ENCODE measurements at regions of chr13 and their contacts with region 1.

Region 1: GRCh38 chr13:110915057-110915873 is at the start of gene ANKRD10:
- DNase-seq: peak; percentile 99
- H3K4me3 ChIP-seq: peak within 1 kb of the TSS; percentile 81 to 96
- H3K27ac ChIP-seq: peak within 1 kb of the TSS; percentile 97 to 98
- H3K4me1 ChIP-seq: peaks cover 0 to 43% (median 24%) of the 10 kb centered on the region in 4 donors
- H3K27me3 ChIP-seq: no peaks in the 10 kb centered on the region
- CTCF ChIP-seq: peak; percentile 90 to 94

Region 2: DNA sequence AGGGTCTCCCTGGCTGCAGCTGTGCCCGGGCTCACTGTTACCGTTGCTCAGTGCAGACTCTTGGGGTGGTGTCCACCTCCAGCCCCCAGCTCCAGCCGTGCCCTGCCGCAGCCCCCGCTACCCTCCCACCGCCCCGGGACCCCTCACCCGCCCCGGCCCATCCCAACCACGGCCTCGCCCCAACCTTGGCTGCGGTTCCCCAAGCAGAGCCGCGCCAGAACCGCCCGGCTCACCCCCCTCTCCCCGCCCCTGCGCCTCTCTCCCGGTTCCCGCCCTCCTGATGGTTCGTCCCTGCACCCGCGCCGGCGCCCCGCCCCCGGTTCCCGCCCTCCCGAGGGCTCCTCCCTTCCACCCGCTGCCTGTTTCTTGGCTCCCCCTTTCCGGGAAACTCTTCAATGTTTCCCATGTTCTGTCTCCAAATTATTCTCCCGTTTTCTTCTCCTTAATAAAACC is 40.7 kb before region 1 on chr13:
- intact Hi-C with region 1: loop called (anchors 2 kb)
- DNase-seq: peak; percentile 86 to 94
- H3K4me3 ChIP-seq: peak overlapping the region; percentile 44 to 53
- H3K27ac ChIP-seq: peak overlapping the region; percentile 33 to 47
- H3K4me1 ChIP-seq: peaks cover 0 to 33% (median 26%) of the 10 kb centered on the region in 4 donors
- H3K27me3 ChIP-seq: no peaks in the 10 kb centered on the region
- CTCF ChIP-seq: no peak

Region 3: DNA sequence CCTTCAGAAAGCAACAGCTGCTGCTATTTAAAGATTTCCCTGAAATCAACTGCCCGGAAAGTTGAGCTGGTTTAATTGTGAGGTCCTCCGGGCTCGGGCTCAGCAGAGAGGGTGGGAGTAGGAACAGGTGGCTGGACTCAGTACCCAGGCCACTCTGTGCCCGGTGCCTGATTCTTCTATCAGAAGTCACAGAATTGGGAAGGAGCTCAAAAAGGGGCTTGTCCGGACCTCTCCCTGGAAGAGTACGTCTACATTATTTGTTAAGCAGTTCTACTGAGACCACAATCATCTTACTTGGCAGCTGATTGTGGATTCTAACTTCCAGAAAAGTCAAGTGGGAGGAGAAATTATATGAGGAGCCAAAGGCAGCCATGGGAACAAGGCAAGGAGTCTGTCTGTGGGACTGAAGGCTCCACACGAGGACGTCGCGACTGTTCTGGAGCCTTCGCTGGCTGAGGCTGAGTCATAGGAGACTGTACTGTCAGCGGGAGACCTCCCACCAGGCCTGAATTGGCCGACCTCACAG is 91.3 kb after region 1 on chr13:
- intact Hi-C with region 1: loop called (anchors 5 kb)
- DNase-seq: peak; percentile 88 to 94
- H3K4me3 ChIP-seq: peak overlapping the region; percentile 22 to 37
- H3K27ac ChIP-seq: peak overlapping the region; percentile 85 to 90
- H3K4me1 ChIP-seq: peaks cover 5 to 26% (median 19%) of the 10 kb centered on the region in 4 donors
- H3K27me3 ChIP-seq: no peaks in the 10 kb centered on the region
- CTCF ChIP-seq: no peak

Region 4: GRCh38 chr13:111114362-111115060 is 199.2 kb after region 1 on chr13:
- intact Hi-C with region 1: loop called (anchors 5 kb)
- DNase-seq: peak; percentile 61 to 81
- H3K4me3 ChIP-seq: peak overlapping the region; percentile 76 to 78
- H3K27ac ChIP-seq: peak overlapping the region; percentile 90
- H3K4me1 ChIP-seq: peaks cover 0 to 42% (median 19%) of the 10 kb centered on the region in 4 donors
- H3K27me3 ChIP-seq: no peaks in the 10 kb centered on the region
- CTCF ChIP-seq: no peak

Region 5: GRCh38 chr13:111281751-111282311 is 366.6 kb after region 1 on chr13:
- intact Hi-C with region 1: loop called (anchors 10 kb)
- DNase-seq: no peak
- H3K4me3 ChIP-seq: no peak overlapping the region
- H3K27ac ChIP-seq: peak overlapping the region; percentile 71 to 80
- H3K4me1 ChIP-seq: peaks cover 0 to 65% (median 39%) of the 10 kb centered on the region in 4 donors
- H3K27me3 ChIP-seq: no peaks in the 10 kb centered on the region
- CTCF ChIP-seq: no peak